ENCODE measurements at regions of chr20 and their contacts with region 1.

Region 1: DNA sequence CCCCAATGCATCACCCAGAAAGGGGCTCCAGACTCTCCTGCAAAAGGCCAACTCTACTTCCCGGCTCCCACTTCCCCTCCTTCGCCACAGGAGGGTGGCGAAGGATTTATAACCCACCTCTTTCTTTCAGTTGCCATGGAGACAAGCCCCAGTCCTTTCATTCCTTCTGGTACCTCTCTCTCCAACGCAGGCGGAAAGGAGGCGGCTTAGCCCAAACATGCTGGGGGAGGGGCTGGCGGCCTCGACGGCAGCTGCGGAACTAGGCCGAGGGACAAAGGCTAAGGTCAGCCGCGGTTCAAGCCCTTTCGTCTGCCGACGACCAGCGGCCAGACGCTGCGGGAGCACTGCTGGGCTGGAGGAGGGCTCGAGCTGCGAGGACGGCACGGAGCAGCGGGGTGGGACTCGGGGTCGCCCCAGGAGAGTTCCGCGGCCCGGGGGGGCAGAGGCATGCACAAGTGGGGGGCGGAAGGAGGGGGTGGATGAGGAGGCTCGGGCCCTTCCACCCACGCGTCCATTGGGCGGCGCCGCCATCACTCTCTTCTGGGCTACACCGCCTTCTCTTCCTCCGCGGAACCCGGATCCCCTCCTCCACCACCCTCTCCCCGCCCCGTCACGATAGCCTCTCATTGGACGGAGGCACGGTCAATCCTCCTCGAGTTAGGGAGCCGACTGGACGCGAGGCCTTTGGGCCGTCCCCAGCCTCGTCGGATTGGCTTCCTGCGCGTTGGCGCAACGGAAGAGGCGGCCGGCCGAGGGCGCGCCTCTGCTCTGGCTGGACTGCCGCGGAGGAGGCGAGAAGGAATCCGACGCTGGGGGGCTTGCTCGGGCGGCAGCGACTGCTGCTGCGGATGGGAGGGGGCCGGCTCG is at the start of gene PANK2:
- DNase-seq: peak; percentile 98
- ATAC-seq: peak; percentile 95
- H3K4me3 ChIP-seq: peak within 1 kb of the TSS; percentile 97
- H3K27ac ChIP-seq: peak within 1 kb of the TSS; percentile 93
- H3K4me1 ChIP-seq: peaks cover 18% of the 10 kb centered on the region
- H3K27me3 ChIP-seq: no peaks in the 10 kb centered on the region
- CTCF ChIP-seq: peak; percentile 19 to 74 (median 39); a peak in 4 of 6 replicates
- EP300 ChIP-seq: peak in 1 of 2 experiments; percentile 14; a peak in 1 of 4 replicates
- POLR2A ChIP-seq: peak; percentile 90
- RAD21 ChIP-seq: peak; percentile 76
- polyA plus RNA-seq, gene PANK2: 13.2 to 16.3 TPM

Region 2: DNA sequence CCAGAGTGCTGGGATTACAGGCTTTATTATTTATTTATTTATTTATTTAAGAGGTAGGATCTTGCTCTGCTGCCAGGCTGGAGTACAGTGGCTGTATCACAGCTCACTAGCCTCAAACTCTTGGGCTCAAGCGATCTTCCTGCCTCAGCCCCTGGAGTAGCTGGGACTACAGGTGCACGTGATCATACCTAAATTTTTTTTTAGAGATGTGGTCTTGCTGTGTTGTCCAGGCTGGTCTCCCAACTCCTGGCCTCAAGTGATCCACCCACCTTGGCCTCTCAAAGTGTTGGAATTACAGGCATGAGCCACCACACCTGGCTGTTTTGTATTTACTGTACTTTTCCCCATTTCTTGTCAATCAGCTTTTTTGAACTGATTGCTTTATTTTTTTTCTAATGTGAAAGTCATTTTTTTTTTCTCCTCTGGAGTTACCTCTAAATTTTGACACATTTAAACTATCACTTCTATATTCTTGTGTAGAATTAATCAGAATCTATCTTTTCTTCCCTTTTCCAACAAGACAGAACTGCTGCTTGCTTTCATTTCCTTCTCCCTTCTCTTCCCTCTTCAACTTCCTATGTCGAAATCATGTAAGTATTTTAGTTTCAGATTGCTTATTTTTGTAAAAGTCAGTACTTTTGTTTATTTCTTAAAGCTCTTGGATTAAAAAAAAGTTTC is 12.3 kb after region 1 on chr20:
- CTCF ChIA-PET with region 1: interaction called, 11 read pairs
- POLR2A ChIA-PET with region 1: interaction called, 68 read pairs
- RAD21 ChIA-PET with region 1: interaction called, 41 read pairs
- SMC1A ChIA-PET with region 1: interaction called, 69 read pairs
- in situ Hi-C with region 1: no loop called
- intact Hi-C with region 1: loop called (anchors 2 kb)
- DNase-seq: no peak
- ATAC-seq: no peak
- H3K4me3 ChIP-seq: no peak overlapping the region
- H3K27ac ChIP-seq: peak overlapping the region; percentile 31; the same call in 1 of the 2 replicates
- H3K4me1 ChIP-seq: peaks cover 32% of the 10 kb centered on the region
- H3K27me3 ChIP-seq: no peaks in the 10 kb centered on the region
- CTCF ChIP-seq: no peak
- EP300 ChIP-seq: no peak
- POLR2A ChIP-seq: no peak
- RAD21 ChIP-seq: no peak

Region 3: GRCh38 chr20:3911956-3912355 is 23.1 kb after region 1 on chr20:
- CTCF ChIA-PET with region 1: interaction called, 8 read pairs
- POLR2A ChIA-PET with region 1: interaction called, 68 read pairs
- RAD21 ChIA-PET with region 1: interaction called, 41 read pairs
- SMC1A ChIA-PET with region 1: interaction called, 69 read pairs
- in situ Hi-C with region 1: no loop called
- intact Hi-C with region 1: loop called (anchors 2 kb)
- DNase-seq: no peak
- ATAC-seq: no peak
- H3K4me3 ChIP-seq: no peak overlapping the region
- H3K27ac ChIP-seq: no peak overlapping the region
- H3K4me1 ChIP-seq: peaks cover 26% of the 10 kb centered on the region
- H3K27me3 ChIP-seq: no peaks in the 10 kb centered on the region
- CTCF ChIP-seq: no peak
- EP300 ChIP-seq: no peak
- POLR2A ChIP-seq: 0 out of 2 replicates have a peak, but pooled peaks have one; percentile 21
- RAD21 ChIP-seq: no peak

Region 4: DNA sequence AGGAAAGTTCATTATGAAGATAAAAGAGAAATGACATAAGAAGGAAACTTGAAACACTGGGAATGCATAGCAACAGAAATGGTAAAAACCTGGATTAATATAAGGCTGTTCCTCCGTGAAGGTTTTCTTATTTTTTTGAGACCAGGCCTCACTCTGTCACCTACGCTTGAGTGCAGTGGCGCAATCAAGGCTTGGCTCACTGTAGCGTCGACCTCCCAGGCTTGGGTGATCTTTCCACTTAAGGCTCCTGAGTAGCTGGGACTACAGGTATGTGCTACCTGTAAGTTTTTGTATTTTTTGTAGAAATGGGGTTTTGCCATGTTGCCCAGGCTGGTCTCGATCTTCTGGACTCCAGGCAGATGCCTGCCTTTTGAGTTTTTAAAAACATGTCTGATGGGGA is 52.0 kb after region 1 on chr20:
- CTCF ChIA-PET with region 1: no interaction called
- POLR2A ChIA-PET with region 1: no interaction called
- RAD21 ChIA-PET with region 1: no interaction called
- SMC1A ChIA-PET with region 1: no interaction called
- in situ Hi-C with region 1: no loop called
- intact Hi-C with region 1: no loop called
- DNase-seq: no peak
- ATAC-seq: no peak
- H3K4me3 ChIP-seq: no peak overlapping the region
- H3K27ac ChIP-seq: no peak overlapping the region
- H3K4me1 ChIP-seq: peaks cover 3% of the 10 kb centered on the region
- H3K27me3 ChIP-seq: no peaks in the 10 kb centered on the region
- CTCF ChIP-seq: no peak
- EP300 ChIP-seq: no peak
- POLR2A ChIP-seq: no peak
- RAD21 ChIP-seq: no peak

Region 5: DNA sequence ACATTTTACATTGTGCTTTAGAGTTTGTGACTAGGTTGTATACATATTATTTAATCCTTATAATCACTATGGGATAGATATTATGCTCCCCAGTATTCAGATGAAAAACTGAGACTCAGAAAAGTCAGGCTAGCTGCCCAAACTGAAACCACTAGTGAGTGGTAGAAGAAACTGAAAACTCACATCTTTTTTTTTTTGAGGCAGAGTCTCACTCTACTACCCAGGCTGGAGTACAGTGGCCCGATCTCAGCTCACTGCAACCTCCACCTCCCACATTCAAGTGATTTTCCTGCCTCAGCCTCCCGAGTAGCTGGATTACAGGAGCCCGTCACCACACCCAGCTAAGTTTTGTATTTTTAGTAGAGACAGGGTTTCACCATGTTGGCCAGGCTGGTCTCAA is 104.3 kb after region 1 on chr20:
- CTCF ChIA-PET with region 1: interaction called, 3 read pairs
- POLR2A ChIA-PET with region 1: interaction called, 11 read pairs
- RAD21 ChIA-PET with region 1: interaction called, 3 read pairs
- SMC1A ChIA-PET with region 1: interaction called, 6 read pairs
- in situ Hi-C with region 1: no loop called
- intact Hi-C with region 1: no loop called
- DNase-seq: no peak
- ATAC-seq: peak; percentile 90
- H3K4me3 ChIP-seq: no peak overlapping the region
- H3K27ac ChIP-seq: no peak overlapping the region
- H3K4me1 ChIP-seq: peaks cover 32% of the 10 kb centered on the region
- H3K27me3 ChIP-seq: no peaks in the 10 kb centered on the region
- CTCF ChIP-seq: no peak
- EP300 ChIP-seq: no peak
- POLR2A ChIP-seq: no peak
- RAD21 ChIP-seq: no peak

Region 6: DNA sequence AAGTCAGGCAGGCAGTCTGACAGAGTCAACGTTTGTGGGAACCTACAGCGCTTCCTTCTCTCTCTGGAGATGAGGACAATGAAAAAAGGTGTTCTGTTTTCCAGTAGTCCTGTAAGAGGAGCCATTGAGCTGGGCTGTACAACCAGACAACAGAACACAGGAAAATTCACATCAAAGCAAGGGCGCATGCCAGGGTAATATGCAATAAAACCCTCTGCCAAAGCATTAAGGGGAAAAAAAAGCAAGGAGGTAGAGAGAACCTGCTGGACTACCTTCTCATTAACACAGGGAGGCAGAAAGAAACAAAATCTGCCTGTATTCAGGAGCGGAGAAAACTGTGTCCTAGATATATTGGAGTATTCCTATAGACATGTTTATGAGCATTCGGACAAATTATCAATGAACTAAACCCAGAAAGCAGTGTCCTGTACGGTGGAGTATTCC is 125.2 kb after region 1 on chr20:
- CTCF ChIA-PET with region 1: interaction called, 9 read pairs
- POLR2A ChIA-PET with region 1: interaction called, 3 read pairs
- RAD21 ChIA-PET with region 1: interaction called, 4 read pairs
- SMC1A ChIA-PET with region 1: interaction called, 5 read pairs
- in situ Hi-C with region 1: no loop called
- intact Hi-C with region 1: loop called (anchors 1 kb)
- DNase-seq: no peak
- ATAC-seq: peak; percentile 35
- H3K4me3 ChIP-seq: peak overlapping the region; percentile 87
- H3K27ac ChIP-seq: no peak overlapping the region
- H3K4me1 ChIP-seq: peaks cover 20% of the 10 kb centered on the region
- H3K27me3 ChIP-seq: no peaks in the 10 kb centered on the region
- CTCF ChIP-seq: peak; percentile 50 to 73 (median 59)
- EP300 ChIP-seq: no peak
- POLR2A ChIP-seq: no peak
- RAD21 ChIP-seq: peak; percentile 83

Region 7: GRCh38 chr20:4082406-4083097 is 193.7 kb after region 1 on chr20:
- CTCF ChIA-PET with region 1: interaction called, 22 read pairs
- POLR2A ChIA-PET with region 1: interaction called, 3 read pairs
- RAD21 ChIA-PET with region 1: interaction called, 7 read pairs
- SMC1A ChIA-PET with region 1: interaction called, 9 read pairs
- in situ Hi-C with region 1: no loop called
- intact Hi-C with region 1: loop called (anchors 1 kb)
- DNase-seq: peak; percentile 59
- ATAC-seq: peak; percentile 77
- H3K4me3 ChIP-seq: no peak overlapping the region; the same call in 1 of the 2 replicates
- H3K27ac ChIP-seq: peak overlapping the region; percentile 66
- H3K4me1 ChIP-seq: peaks cover 22% of the 10 kb centered on the region
- H3K27me3 ChIP-seq: no peaks in the 10 kb centered on the region; a peak in 1 of 4 replicates
- CTCF ChIP-seq: no peak
- EP300 ChIP-seq: peak in 1 of 2 experiments; percentile 24; a peak in 1 of 4 replicates
- POLR2A ChIP-seq: no peak; the same call in 1 of the 2 replicates
- RAD21 ChIP-seq: no peak

Measured in GM12878 (cell line).